Dorsolateral prefrontal cortex (tissue), 120 donors: ENCODE measurements at regions of chr2 and their contacts with region 1.

Region 1: DNA sequence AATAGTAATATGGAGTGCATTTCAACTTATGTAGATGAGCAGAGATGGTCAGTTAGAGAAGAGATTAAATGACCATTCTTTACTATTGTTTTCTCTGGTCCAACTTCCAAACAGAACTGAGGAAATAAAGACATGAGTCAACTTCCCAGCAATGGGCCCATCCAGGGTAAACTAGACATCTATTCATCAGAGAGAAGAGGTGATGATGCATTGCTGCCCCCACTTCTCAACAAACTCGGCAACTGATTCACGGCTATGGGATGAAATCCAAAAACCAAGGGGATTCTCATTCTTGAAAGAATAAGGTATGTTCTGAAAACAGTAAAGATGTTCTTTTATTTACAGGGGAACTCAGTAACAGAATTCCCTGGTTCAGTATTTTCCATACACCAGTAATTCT is 190.7 kb downstream of the RDH14 start:
- DNase-seq: no peak
- H3K4me3 ChIP-seq: no peak overlapping the region
- H3K27ac ChIP-seq: no peak overlapping the region
- H3K27me3 ChIP-seq: peaks cover 0 to 8% (median 0%) of the 10 kb centered on the region in 45 donors
- CTCF ChIP-seq: no peak

Region 2: GRCh38 chr2:17740203-17740602 is 629.6 kb before region 1 on chr2:
- intact Hi-C with region 1: loop called in 1 of 2 experiments (anchors 5 kb)
- DNase-seq: no peak
- H3K4me3 ChIP-seq: no peak overlapping the region
- H3K27ac ChIP-seq: no peak overlapping the region
- H3K27me3 ChIP-seq: no peaks in the 10 kb centered on the region
- CTCF ChIP-seq: no peak